ENCODE measurements at regions of chr12 and their contacts with region 1.

Region 1: DNA sequence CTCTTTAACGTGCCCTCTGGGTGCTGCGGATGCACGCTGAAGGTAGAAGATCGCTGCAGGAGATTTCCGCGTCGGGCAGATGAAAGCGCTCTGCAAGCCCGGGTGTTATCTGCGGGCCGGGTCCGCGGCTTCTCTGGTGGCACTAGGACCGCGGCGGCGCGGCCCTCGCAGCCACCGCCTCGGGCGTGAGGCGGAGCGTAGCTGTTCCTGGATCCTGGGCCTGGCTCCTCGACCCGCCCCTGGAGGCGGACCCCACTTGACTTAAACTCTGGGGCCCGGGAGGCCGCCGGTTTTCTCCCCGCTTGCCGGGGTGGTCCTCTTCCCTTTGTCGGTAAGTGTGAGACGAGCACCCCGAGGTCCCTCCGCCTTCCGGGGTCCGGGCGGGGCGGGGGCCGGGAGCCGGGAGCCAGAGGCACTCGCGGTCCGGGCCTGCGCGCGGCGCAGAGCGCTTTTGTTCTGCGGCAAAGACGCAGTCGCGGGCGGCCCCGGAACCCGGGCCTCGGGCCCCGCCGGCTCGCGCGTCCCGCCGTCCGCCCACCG is at the start of gene RESF1:
- DNase-seq: peak; percentile 88 to 90 (median 89)
- H3K4me3 ChIP-seq: peak within 1 kb of the TSS; percentile 95 to 100
- H3K4me3 Mint-ChIP-seq: peak within 1 kb of the TSS; percentile 94 to 98 (median 97)
- H3K27ac ChIP-seq: peak within 1 kb of the TSS; percentile 72
- H3K27ac Mint-ChIP-seq: peak within 1 kb of the TSS; percentile 94 to 98 (median 97)
- H3K4me1 ChIP-seq: peaks cover 61% of the 10 kb centered on the region
- H3K4me1 Mint-ChIP-seq: peaks cover 45 to 83% (median 57%) of the 10 kb centered on the region in 4 donors
- H3K27me3 ChIP-seq: no peaks in the 10 kb centered on the region
- H3K27me3 Mint-ChIP-seq: no peaks in the 10 kb centered on the region
- total RNA-seq, gene RESF1: 539 to 545 TPM

Region 2: DNA sequence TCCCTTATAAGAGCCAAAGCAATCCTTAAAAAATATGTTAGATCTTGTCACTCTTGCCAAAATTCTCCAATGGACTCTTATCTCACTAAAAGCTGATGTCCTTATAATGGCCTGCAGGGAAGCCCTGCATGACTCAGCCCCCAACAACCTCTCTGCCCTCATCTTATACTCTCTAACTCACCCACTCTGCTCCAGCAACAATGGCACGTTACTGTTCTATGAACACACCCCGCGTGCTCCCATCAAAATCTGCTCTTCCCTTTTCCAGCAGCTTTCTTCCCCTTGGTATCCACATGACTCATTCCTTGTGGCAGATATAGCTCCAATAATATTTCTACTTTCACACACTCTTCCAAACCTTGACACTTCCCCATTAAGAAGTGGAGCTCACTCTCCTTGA is 476.4 kb before region 1 on chr12:
- CTCF ChIA-PET with region 1: no interaction called
- POLR2A ChIA-PET with region 1: no interaction called
- intact Hi-C with region 1: no loop called
- DNase-seq: no peak
- H3K4me3 ChIP-seq: no peak overlapping the region
- H3K4me3 Mint-ChIP-seq: no peak overlapping the region
- H3K27ac ChIP-seq: no peak overlapping the region
- H3K27ac Mint-ChIP-seq: no peak overlapping the region
- H3K4me1 ChIP-seq: no peaks in the 10 kb centered on the region
- H3K4me1 Mint-ChIP-seq: peaks cover 0 to 1% (median 0%) of the 10 kb centered on the region in 4 donors
- H3K27me3 ChIP-seq: no peaks in the 10 kb centered on the region
- H3K27me3 Mint-ChIP-seq: peaks cover 0 to 2% of the 10 kb centered on the region in 2 donors

Region 3: DNA sequence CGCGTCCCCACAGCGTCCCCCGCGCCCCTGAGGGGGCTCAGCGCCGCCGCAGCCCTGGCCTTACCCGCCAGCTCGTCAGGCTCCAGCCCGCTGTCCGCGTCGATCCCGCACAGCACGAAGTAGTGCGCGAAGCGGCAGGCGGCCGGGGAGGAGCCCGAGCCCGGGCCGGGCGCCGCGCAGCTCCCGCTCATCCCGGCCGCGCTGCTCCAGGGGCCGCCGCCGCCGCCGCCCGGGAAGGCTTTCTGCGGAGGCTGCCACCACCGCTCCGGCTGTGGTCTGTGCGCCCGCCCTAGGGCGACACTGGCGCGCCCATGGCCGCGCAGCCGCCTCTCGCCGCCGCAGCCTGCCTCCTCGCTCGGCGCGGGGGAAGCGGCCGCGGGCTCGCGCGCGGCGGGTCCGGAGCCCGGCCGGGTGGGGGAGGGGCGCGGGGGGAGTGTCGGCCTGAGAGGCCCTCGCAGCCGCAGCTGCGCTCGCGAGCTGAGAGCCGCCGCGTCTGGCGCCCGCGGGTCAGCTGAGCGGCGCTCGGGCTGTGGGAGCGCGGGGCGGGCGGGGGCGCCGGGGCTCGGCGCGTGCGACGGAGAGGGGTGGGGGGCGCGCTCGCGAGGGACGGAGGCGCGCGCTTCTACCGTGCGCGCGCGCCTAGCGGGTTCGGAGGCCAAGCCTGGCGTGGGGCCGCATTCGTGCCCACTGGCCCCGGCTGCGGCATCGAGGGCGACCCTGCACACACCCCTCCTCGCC is 368.4 kb before region 1 on chr12 and contains the start of gene DENND5B:
- CTCF ChIA-PET with region 1: no interaction called
- POLR2A ChIA-PET with region 1: no interaction called
- intact Hi-C with region 1: no loop called
- DNase-seq: peak in 2 of 5 donors; percentile 5 to 6
- H3K4me3 ChIP-seq: peak within 1 kb of the TSS; percentile 17 to 38
- H3K4me3 Mint-ChIP-seq: peak within 1 kb of the TSS; percentile 79 to 88 (median 84)
- H3K27ac ChIP-seq: no peak within 1 kb of the TSS
- H3K27ac Mint-ChIP-seq: peak within 1 kb of the TSS in 1 of 7 donors; percentile 42
- H3K4me1 ChIP-seq: peaks cover 5% of the 10 kb centered on the region
- H3K4me1 Mint-ChIP-seq: peaks cover 10 to 19% (median 11%) of the 10 kb centered on the region in 4 donors
- H3K27me3 ChIP-seq: peaks cover 23% of the 10 kb centered on the region
- H3K27me3 Mint-ChIP-seq: peaks cover 45% of the 10 kb centered on the region in 2 donors
- total RNA-seq, gene DENND5B: not detected

Region 4: GRCh38 chr12:31650927-31651326 is 308.3 kb before region 1 on chr12:
- CTCF ChIA-PET with region 1: interaction called, 13 read pairs
- POLR2A ChIA-PET with region 1: interaction called, 22 read pairs
- intact Hi-C with region 1: no loop called
- DNase-seq: no peak
- H3K4me3 ChIP-seq: no peak overlapping the region
- H3K4me3 Mint-ChIP-seq: no peak overlapping the region
- H3K27ac ChIP-seq: no peak overlapping the region
- H3K27ac Mint-ChIP-seq: no peak overlapping the region
- H3K4me1 ChIP-seq: peaks cover 12% of the 10 kb centered on the region
- H3K4me1 Mint-ChIP-seq: peaks cover 6 to 12% (median 7%) of the 10 kb centered on the region in 4 donors
- H3K27me3 ChIP-seq: no peaks in the 10 kb centered on the region
- H3K27me3 Mint-ChIP-seq: peaks cover 0 to 2% of the 10 kb centered on the region in 2 donors

Region 5: GRCh38 chr12:31728917-31729640 is 230.2 kb before region 1 on chr12 and contains the start of gene AMN1:
- CTCF ChIA-PET with region 1: interaction called, 4 read pairs
- POLR2A ChIA-PET with region 1: interaction called, 97 read pairs
- intact Hi-C with region 1: loop called (anchors 1 kb)
- DNase-seq: peak; percentile 98 to 100 (median 99)
- H3K4me3 ChIP-seq: peak within 1 kb of the TSS; percentile 88 to 99
- H3K4me3 Mint-ChIP-seq: peak within 1 kb of the TSS; percentile 98 to 100 (median 99)
- H3K27ac ChIP-seq: peak within 1 kb of the TSS; percentile 81
- H3K27ac Mint-ChIP-seq: peak within 1 kb of the TSS; percentile 97 to 100 (median 99)
- H3K4me1 ChIP-seq: peaks cover 54% of the 10 kb centered on the region
- H3K4me1 Mint-ChIP-seq: peaks cover 39 to 76% (median 55%) of the 10 kb centered on the region in 4 donors
- H3K27me3 ChIP-seq: no peaks in the 10 kb centered on the region
- H3K27me3 Mint-ChIP-seq: no peaks in the 10 kb centered on the region
- total RNA-seq, gene AMN1: 15.3 to 18.4 TPM

Region 6: GRCh38 chr12:31832740-31833729 is 126.2 kb before region 1 on chr12:
- CTCF ChIA-PET with region 1: no interaction called
- POLR2A ChIA-PET with region 1: interaction called, 17 read pairs
- intact Hi-C with region 1: no loop called
- DNase-seq: peak; percentile 48 to 73 (median 67)
- H3K4me3 ChIP-seq: peak overlapping the region; percentile 7 to 21
- H3K4me3 Mint-ChIP-seq: peak overlapping the region in 7 of 8 donors; percentile 62 to 81 (median 70)
- H3K27ac ChIP-seq: no peak overlapping the region
- H3K27ac Mint-ChIP-seq: peak overlapping the region; percentile 57 to 90 (median 83)
- H3K4me1 ChIP-seq: peaks cover 43% of the 10 kb centered on the region
- H3K4me1 Mint-ChIP-seq: peaks cover 34 to 56% (median 47%) of the 10 kb centered on the region in 4 donors
- H3K27me3 ChIP-seq: no peaks in the 10 kb centered on the region
- H3K27me3 Mint-ChIP-seq: no peaks in the 10 kb centered on the region

Region 7: GRCh38 chr12:31922341-31923062 is 36.7 kb before region 1 on chr12:
- CTCF ChIA-PET with region 1: interaction called, 3 read pairs
- POLR2A ChIA-PET with region 1: interaction called, 10 read pairs
- intact Hi-C with region 1: no loop called
- DNase-seq: no peak
- H3K4me3 ChIP-seq: no peak overlapping the region
- H3K4me3 Mint-ChIP-seq: peak overlapping the region in 1 of 8 donors; percentile 15
- H3K27ac ChIP-seq: no peak overlapping the region
- H3K27ac Mint-ChIP-seq: peak overlapping the region in 1 of 7 donors; percentile 69
- H3K4me1 ChIP-seq: peaks cover 3% of the 10 kb centered on the region
- H3K4me1 Mint-ChIP-seq: peaks cover 1 to 8% (median 4%) of the 10 kb centered on the region in 4 donors
- H3K27me3 ChIP-seq: no peaks in the 10 kb centered on the region
- H3K27me3 Mint-ChIP-seq: no peaks in the 10 kb centered on the region

Region 8: DNA sequence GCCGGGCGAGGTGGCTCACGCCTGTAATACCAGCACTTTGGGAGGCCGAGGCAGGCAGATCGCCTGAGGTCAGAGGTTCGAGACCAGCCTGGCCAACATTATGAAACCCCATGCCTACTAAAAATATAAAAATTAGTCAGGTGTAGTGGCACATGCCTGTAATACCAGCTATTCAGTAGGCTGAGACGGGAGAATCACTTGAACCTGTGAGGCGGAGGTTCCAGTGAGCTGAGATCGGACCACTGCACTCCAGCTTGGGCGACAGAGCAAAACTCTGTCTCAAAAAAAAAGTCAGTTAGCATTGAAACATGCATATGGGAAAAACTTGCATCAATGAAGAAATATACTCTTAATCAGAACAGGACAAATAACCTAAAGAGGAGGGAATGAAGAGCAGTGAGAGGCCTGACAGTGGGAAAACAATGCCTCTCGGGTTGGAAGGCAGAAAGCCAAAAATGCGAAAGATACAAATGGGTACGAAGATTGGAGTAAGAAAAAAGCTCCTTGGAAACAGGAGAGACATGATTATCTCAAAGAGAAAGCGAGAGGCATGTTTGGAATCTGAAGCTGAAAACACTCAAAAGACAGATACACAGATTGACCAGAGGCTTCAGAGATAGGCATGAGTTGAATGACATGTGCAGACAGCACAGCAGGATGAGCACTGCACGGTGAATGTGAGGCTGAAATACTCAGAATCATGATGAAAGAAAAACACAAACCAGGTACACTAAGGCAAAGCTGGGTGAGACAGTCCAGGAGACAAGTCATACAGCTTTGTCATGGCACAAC is 30.5 kb after region 1 on chr12:
- CTCF ChIA-PET with region 1: interaction called, 4 read pairs
- POLR2A ChIA-PET with region 1: interaction called, 55 read pairs
- intact Hi-C with region 1: no loop called
- DNase-seq: no peak
- H3K4me3 ChIP-seq: no peak overlapping the region
- H3K4me3 Mint-ChIP-seq: peak overlapping the region in 1 of 8 donors; percentile 58
- H3K27ac ChIP-seq: no peak overlapping the region
- H3K27ac Mint-ChIP-seq: peak overlapping the region in 5 of 7 donors; percentile 14 to 84 (median 63)
- H3K4me1 ChIP-seq: peaks cover 7% of the 10 kb centered on the region
- H3K4me1 Mint-ChIP-seq: peaks cover 20 to 28% (median 27%) of the 10 kb centered on the region in 4 donors
- H3K27me3 ChIP-seq: no peaks in the 10 kb centered on the region
- H3K27me3 Mint-ChIP-seq: no peaks in the 10 kb centered on the region

Region 9: DNA sequence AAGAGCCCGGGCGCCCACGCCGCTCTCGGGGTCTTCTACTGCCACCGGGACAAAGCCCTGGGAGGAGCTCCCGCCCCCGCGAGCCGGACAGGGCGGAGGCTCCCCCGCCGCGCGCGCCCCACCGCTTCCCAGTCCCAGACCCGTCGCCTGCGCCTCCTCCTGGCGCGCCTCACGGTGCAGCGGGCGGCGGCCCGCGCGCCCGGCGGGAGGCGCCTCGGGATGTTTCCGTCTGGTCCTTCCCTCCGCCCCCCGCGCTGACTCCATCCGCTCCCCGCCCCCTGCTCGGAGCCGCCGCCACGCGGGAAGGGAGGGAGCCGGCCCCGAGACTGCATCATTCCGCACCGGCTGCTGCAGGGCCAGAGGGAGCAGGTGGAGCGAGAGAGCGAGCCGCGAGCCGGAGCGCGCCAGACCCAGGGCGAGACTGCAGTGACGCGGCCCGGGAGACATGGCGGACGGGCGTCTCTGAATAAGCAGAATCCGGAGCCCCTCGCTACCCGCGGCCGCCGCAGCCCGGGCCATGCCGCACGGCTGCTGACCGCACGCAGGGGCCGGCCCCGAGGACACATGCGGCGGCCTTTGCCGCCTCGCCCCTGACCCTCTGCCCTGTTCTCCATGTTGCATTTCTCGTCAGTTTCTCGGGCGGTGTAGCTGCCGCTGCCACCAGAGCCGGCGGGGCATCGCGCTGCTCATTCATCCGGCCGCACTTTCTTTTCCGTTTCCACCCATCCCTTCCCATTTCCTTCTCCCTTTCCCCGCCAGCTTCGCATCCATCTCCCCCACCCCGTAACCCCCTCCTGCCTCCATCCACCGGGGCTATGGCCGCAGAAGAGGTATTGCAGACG is 147.5 kb after region 1 on chr12 and contains the start of gene BICD1:
- CTCF ChIA-PET with region 1: no interaction called
- POLR2A ChIA-PET with region 1: interaction called, 3 read pairs
- intact Hi-C with region 1: loop called (anchors 2 kb)
- DNase-seq: peak; percentile 62 to 70 (median 66)
- H3K4me3 ChIP-seq: peak within 1 kb of the TSS; percentile 84 to 93
- H3K4me3 Mint-ChIP-seq: peak within 1 kb of the TSS; percentile 91 to 98 (median 98)
- H3K27ac ChIP-seq: peak within 1 kb of the TSS; percentile 57
- H3K27ac Mint-ChIP-seq: peak within 1 kb of the TSS; percentile 75 to 94 (median 91)
- H3K4me1 ChIP-seq: peaks cover 33% of the 10 kb centered on the region
- H3K4me1 Mint-ChIP-seq: peaks cover 25 to 35% (median 29%) of the 10 kb centered on the region in 4 donors
- H3K27me3 ChIP-seq: no peaks in the 10 kb centered on the region
- H3K27me3 Mint-ChIP-seq: no peaks in the 10 kb centered on the region
- total RNA-seq, gene BICD1: 16.1 to 20.3 TPM

Measured in CD4-positive, alpha-beta memory T cell (primary cell).